Thyroid gland (tissue), 4 donors: ENCODE measurements at regions of chr9 and their contacts with region 1.

Region 1: DNA sequence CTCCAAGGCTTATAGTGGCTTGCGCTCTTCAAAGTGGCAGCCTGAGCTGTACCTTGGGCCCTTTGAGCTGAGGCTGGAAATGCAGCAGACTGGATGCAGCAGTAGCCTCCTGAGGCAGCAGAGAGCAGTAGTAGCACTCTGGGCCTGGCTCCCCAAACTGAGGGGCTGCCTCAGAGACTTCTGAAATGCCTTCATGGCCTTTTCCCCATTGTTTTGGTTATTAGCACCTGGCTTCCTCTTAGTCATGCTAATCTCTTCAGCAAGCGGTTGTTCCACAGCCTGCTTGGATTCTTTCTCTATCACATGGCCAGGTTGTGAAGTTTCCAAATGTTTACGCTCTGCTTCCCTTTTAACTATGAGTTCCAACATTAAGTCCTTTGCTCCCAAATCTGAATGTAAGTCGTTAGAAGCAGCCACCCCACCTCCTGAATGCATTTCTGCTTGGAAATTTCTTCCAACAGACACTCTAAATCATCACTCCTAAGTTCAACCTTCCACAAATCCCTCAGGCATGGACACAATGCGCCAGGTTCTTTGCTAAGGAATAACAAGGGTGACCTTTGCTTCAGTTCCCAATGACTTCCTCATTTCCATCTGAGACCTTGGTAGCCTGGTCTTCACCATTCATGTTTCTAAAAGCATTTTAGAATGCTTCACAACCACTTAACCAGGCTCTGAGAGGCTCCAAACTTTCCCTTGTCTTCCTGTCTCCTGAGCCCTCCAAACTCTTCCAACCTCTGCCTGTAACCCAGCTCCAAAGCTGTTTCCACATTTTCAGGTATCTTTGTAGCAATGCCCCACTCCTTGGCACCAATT is 145.8 kb downstream of the ZDHHC21 start:
- DNase-seq: no peak
- H3K4me3 ChIP-seq: no peak overlapping the region
- H3K27ac ChIP-seq: no peak overlapping the region
- H3K4me1 ChIP-seq: no peaks in the 10 kb centered on the region
- H3K27me3 ChIP-seq: no peaks in the 10 kb centered on the region
- CTCF ChIP-seq: no peak
- POLR2A ChIP-seq: no peak

Region 2: GRCh38 chr9:14362175-14362574 is 185.3 kb before region 1 on chr9:
- intact Hi-C with region 1: no loop called
- DNase-seq: no peak
- H3K4me3 ChIP-seq: no peak overlapping the region
- H3K27ac ChIP-seq: peak overlapping the region in 1 of 3 donors; percentile 27
- H3K4me1 ChIP-seq: no peaks in the 10 kb centered on the region
- H3K27me3 ChIP-seq: no peaks in the 10 kb centered on the region
- CTCF ChIP-seq: no peak
- POLR2A ChIP-seq: no peak

Region 3: GRCh38 chr9:14485366-14485765 is 62.1 kb before region 1 on chr9:
- intact Hi-C with region 1: loop called (anchors 10 kb)
- DNase-seq: no peak
- H3K4me3 ChIP-seq: no peak overlapping the region
- H3K27ac ChIP-seq: no peak overlapping the region
- H3K4me1 ChIP-seq: no peaks in the 10 kb centered on the region
- H3K27me3 ChIP-seq: no peaks in the 10 kb centered on the region
- CTCF ChIP-seq: no peak
- POLR2A ChIP-seq: no peak